Activated CD4-positive, alpha-beta T cell treated with anti-CD3 and anti-CD28 coated beads for 36 hours (primary cell): ENCODE measurements at regions of chr14 and their contacts with region 1.

Region 1: GRCh38 chr14:64914237-64914971 is at the start of gene CHURC1:
- DNase-seq: peak; percentile 98
- ATAC-seq: peak; percentile 96
- H3K4me3 Mint-ChIP-seq: peak within 1 kb of the TSS; percentile 89
- H3K27ac Mint-ChIP-seq: peak within 1 kb of the TSS; percentile 95
- H3K4me1 Mint-ChIP-seq: peaks cover 45% of the 10 kb centered on the region
- H3K27me3 Mint-ChIP-seq: no peaks in the 10 kb centered on the region
- total RNA-seq, gene CHURC1: 37.6 to 66.1 TPM

Region 2: GRCh38 chr14:64338616-64339316 is 575.6 kb before region 1 on chr14:
- CTCF ChIA-PET with region 1: interaction called, 4 read pairs
- POLR2A ChIA-PET with region 1: no interaction called
- intact Hi-C with region 1: loop called in 1 of 2 experiments (anchors 1 kb)
- DNase-seq: peak; percentile 92
- ATAC-seq: peak; percentile 88
- H3K4me3 Mint-ChIP-seq: peak overlapping the region; percentile 93
- H3K27ac Mint-ChIP-seq: peak overlapping the region; percentile 87
- H3K4me1 Mint-ChIP-seq: peaks cover 18% of the 10 kb centered on the region
- H3K27me3 Mint-ChIP-seq: no peaks in the 10 kb centered on the region

Region 3: GRCh38 chr14:64880221-64881121 is 33.9 kb before region 1 on chr14:
- CTCF ChIA-PET with region 1: no interaction called
- POLR2A ChIA-PET with region 1: interaction called, 5 read pairs
- intact Hi-C with region 1: loop called in 1 of 2 experiments (anchors 1 kb)
- DNase-seq: peak; percentile 79
- ATAC-seq: peak; percentile 89
- H3K4me3 Mint-ChIP-seq: peak overlapping the region; percentile 72
- H3K27ac Mint-ChIP-seq: no peak overlapping the region
- H3K4me1 Mint-ChIP-seq: peaks cover 10% of the 10 kb centered on the region
- H3K27me3 Mint-ChIP-seq: peaks cover 25% of the 10 kb centered on the region

Region 4: DNA sequence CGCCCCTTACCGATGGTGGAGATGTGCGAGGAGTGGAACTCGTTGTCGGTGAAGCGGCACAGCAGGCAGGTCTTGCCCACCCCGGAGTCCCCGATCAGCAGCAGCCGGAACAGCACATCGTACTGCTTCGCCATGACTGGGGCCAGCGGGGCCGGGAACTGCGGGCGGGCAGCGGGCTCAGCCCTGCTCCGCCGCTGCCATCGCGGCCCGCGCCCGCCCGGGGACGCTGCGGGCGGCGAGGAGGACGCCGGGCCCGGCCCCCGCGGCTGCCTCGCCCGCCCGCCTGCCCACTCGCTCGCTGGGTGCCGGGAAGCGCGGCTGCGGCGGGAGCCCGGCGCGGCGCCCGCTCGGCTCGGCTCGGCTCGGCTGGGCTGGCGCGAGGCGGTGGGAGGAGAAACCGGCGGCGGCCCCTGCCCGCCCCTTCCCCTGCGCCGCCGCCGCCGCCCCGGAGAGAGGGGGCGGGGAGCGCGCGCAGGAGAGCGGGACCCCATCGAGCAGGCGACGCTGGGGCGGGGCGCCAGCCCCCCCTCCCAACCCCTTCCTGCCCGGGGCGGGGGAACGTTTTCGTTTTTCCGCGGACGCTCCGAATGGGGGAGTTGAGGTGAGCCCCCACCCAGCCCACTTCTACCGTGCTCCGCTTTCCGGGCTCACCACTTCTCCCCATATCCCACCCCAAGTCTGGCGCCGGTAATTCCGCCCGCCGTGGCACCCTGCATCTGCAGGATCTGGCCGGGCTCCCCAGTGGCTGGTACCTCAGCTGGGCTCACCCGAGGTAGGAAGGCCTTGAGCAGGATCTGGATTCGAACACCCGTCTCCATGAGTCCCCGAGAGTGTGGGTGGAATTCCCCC is 57.8 kb after region 1 on chr14 and contains the start of gene RAB15:
- CTCF ChIA-PET with region 1: no interaction called
- POLR2A ChIA-PET with region 1: no interaction called
- intact Hi-C with region 1: loop called in 1 of 2 experiments (anchors 1 kb)
- DNase-seq: peak; percentile 58
- ATAC-seq: peak; percentile 71
- H3K4me3 Mint-ChIP-seq: peak within 1 kb of the TSS; percentile 74
- H3K27ac Mint-ChIP-seq: peak within 1 kb of the TSS; percentile 51
- H3K4me1 Mint-ChIP-seq: peaks cover 17% of the 10 kb centered on the region
- H3K27me3 Mint-ChIP-seq: no peaks in the 10 kb centered on the region
- total RNA-seq, gene RAB15: 3.7 to 5.3 TPM